ENCODE measurements at regions of chr1 and their contacts with region 1.

Region 1: DNA sequence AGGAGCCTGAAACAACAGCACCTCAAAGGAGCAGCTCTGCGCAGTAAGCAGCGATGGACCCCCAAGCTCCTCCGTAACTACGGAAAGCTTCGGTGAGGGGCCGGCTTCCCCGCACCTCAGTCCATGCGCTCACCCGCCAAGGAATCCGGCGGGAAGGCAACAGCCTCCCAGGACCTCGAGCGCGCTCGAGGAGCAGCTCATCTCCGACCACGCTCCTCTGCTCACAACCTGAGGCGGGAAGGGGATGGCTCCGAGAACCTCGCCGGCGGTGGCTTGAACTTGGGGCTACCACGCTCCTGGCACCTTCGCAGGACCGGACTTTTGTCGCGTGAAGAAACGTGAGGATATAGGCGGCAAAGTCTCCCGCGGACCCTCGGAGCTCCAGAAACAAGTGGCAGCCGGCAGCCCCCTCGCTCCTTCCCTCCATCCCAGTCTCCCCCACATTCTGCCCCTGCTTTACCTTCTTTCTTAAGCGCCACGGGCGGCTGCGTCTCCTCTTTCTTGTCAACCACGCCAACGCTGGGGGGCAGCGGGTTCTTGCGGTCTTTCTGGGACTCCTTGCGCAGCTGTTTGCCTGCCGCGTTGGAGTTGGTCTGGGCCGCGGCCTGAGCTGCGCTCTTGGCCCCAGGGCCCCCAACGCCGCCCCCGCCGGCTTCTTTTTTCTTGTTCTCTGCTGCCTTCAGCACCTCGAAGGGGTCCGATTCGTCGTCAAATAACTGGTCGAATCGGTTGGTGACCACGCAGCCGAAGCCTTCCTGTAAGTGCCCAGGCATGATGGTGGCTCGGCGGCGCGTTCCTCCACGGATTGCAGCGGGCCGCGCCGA is 462 bp downstream of the SERBP1 start:
- DNase-seq: peak; percentile 56 to 80
- ATAC-seq: peak; percentile 59
- H3K4me3 ChIP-seq: peak overlapping the region; percentile 61 to 86
- H3K27ac ChIP-seq: peak overlapping the region in 1 of 2 donors; percentile 52
- H3K4me1 ChIP-seq: no peaks in the 10 kb centered on the region
- H3K27me3 ChIP-seq: no peaks in the 10 kb centered on the region

Region 2: GRCh38 chr1:67347688-67348472 is 81.9 kb before region 1 on chr1:
- intact Hi-C with region 1: loop called in 1 of 2 experiments (anchors 5 kb)
- DNase-seq: no peak
- ATAC-seq: peak; percentile 77
- H3K4me3 ChIP-seq: no peak overlapping the region
- H3K27ac ChIP-seq: no peak overlapping the region
- H3K4me1 ChIP-seq: no peaks in the 10 kb centered on the region
- H3K27me3 ChIP-seq: peaks cover 0 to 1% of the 10 kb centered on the region in 2 donors

Region 3: GRCh38 chr1:67489643-67490042 is 59.9 kb after region 1 on chr1:
- intact Hi-C with region 1: loop called (anchors 10 kb)
- DNase-seq: no peak
- ATAC-seq: no peak
- H3K4me3 ChIP-seq: no peak overlapping the region
- H3K27ac ChIP-seq: no peak overlapping the region
- H3K4me1 ChIP-seq: no peaks in the 10 kb centered on the region
- H3K27me3 ChIP-seq: no peaks in the 10 kb centered on the region

Region 4: GRCh38 chr1:67540733-67541125 is 111.0 kb after region 1 on chr1:
- intact Hi-C with region 1: no loop called
- DNase-seq: no peak
- ATAC-seq: no peak
- H3K4me3 ChIP-seq: no peak overlapping the region
- H3K27ac ChIP-seq: no peak overlapping the region
- H3K4me1 ChIP-seq: no peaks in the 10 kb centered on the region
- H3K27me3 ChIP-seq: no peaks in the 10 kb centered on the region

Region 5: DNA sequence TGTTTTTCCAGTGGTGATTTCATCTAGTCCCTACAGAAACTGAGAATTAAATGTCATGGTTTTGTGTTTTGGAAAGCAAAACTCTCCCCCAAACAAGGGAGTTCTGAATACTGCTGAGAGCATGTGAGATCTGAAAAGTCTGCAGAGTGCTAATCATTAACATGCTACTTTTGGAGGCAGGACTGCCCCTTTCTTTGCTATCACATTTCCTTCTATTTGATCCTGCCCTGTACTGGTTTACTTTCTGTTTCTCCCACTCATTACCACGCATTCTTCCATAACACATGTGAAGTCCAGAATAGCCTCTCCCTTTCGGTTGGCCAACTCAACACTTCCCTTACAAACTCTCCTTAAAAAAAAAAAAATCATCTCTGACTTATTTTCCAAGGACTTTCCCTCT is 318.9 kb after region 1 on chr1:
- intact Hi-C with region 1: no loop called
- DNase-seq: no peak
- ATAC-seq: peak; percentile 66
- H3K4me3 ChIP-seq: peak overlapping the region in 1 of 2 donors; percentile 7
- H3K27ac ChIP-seq: peak overlapping the region; percentile 84 to 99
- H3K4me1 ChIP-seq: peaks cover 16 to 19% of the 10 kb centered on the region in 2 donors
- H3K27me3 ChIP-seq: no peaks in the 10 kb centered on the region

Measured in aorta (tissue), 5 donors.